Ascending aorta (tissue), 2 donors: ENCODE measurements at regions of chr7 and their contacts with region 1.

Region 1: GRCh38 chr7:55572378-55573233 is at the start of gene VOPP1:
- DNase-seq: peak; percentile 26 to 82
- H3K4me3 ChIP-seq: peak within 1 kb of the TSS; percentile 85 to 97
- H3K27ac ChIP-seq: peak within 1 kb of the TSS; percentile 91 to 93
- H3K4me1 ChIP-seq: peaks cover 11 to 44% of the 10 kb centered on the region in 2 donors
- H3K27me3 ChIP-seq: no peaks in the 10 kb centered on the region
- CTCF ChIP-seq: peak in 1 of 3 experiments; percentile 38
- total RNA-seq, gene VOPP1: 78.8 TPM

Region 2: DNA sequence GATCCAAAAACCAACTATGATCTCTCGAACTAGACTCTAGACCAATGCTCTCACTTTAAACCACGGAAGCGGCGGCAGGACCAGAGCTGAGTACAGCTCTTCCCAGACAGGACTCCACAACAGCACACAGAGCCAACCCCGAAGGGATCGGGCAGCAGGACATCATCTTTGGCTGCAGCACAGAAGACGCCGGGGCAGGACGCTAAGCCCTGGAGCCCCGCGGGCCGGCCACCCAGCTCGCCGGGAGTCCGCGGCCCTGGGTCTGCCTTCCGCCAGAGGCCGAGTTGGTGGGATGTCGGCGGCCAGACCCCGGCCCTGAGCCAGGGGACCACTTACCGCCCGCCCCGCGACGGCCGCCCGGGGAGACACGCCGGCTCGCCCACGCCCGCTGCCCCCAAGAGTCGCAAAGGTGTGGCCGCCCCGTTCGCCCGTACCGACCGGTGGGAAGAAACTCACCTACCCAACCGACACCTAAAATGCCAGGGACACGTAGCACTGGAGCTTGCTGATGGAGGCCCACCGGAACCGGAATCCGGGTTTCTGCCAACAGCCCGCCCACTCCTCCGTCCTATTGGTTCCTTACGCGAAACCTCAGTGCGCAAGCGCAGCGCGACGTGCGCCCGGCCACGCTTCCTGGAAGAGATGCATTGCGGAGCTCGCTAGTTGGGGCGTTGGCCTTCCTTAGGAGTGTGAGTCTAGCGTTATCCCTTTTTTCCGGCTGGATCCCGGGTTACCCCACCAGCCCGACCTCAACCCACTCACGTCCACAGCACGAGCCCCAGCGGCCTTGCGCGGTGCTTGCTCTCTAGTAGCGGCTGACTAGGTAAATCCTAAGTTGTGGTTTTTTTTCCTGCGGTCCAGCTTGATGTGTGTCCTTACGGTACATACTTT is 813.7 kb before region 1 on chr7 and contains the start of gene SEC61G:
- intact Hi-C with region 1: loop called (anchors 10 kb)
- DNase-seq: peak; percentile 89 to 98
- H3K4me3 ChIP-seq: peak within 1 kb of the TSS; percentile 78 to 92
- H3K27ac ChIP-seq: peak within 1 kb of the TSS; percentile 84 to 86
- H3K4me1 ChIP-seq: peaks cover 0 to 19% of the 10 kb centered on the region in 2 donors
- H3K27me3 ChIP-seq: no peaks in the 10 kb centered on the region
- CTCF ChIP-seq: peak in 1 of 3 experiments; percentile 12
- total RNA-seq, gene SEC61G: 166 TPM

Region 3: GRCh38 chr7:55365675-55366460 is 206.7 kb before region 1 on chr7:
- intact Hi-C with region 1: loop called (anchors 5 kb)
- DNase-seq: peak; percentile 70 to 97
- H3K4me3 ChIP-seq: peak overlapping the region; percentile 64 to 100
- H3K27ac ChIP-seq: peak overlapping the region; percentile 98 to 99
- H3K4me1 ChIP-seq: peaks cover 5 to 10% of the 10 kb centered on the region in 2 donors
- H3K27me3 ChIP-seq: no peaks in the 10 kb centered on the region
- CTCF ChIP-seq: peak in 2 of 3 experiments; percentile 21 to 44

Region 4: GRCh38 chr7:55552320-55553023 is 20.1 kb before region 1 on chr7:
- intact Hi-C with region 1: loop called (anchors 1 kb)
- DNase-seq: peak; percentile 51 to 86
- H3K4me3 ChIP-seq: peak overlapping the region; percentile 32 to 41
- H3K27ac ChIP-seq: peak overlapping the region; percentile 74 to 76
- H3K4me1 ChIP-seq: peaks cover 0 to 17% of the 10 kb centered on the region in 2 donors
- H3K27me3 ChIP-seq: no peaks in the 10 kb centered on the region
- CTCF ChIP-seq: no peak

Region 5: GRCh38 chr7:55964261-55965099 is 391.9 kb after region 1 on chr7 and contains the start of gene NIPSNAP2:
- intact Hi-C with region 1: loop called (anchors 5 kb)
- DNase-seq: peak; percentile 15 to 86
- H3K4me3 ChIP-seq: peak within 1 kb of the TSS; percentile 90 to 92
- H3K27ac ChIP-seq: peak within 1 kb of the TSS; percentile 88 to 99
- H3K4me1 ChIP-seq: peaks cover 4 to 13% of the 10 kb centered on the region in 2 donors
- H3K27me3 ChIP-seq: no peaks in the 10 kb centered on the region
- CTCF ChIP-seq: peak in 1 of 3 experiments; percentile 83
- total RNA-seq, gene NIPSNAP2: 33.3 TPM

Region 6: GRCh38 chr7:56092789-56093531 is 520.4 kb after region 1 on chr7 and contains the start of gene PHKG1:
- intact Hi-C with region 1: loop called (anchors 5 kb)
- DNase-seq: peak in 1 of 2 donors; percentile 91
- H3K4me3 ChIP-seq: peak within 1 kb of the TSS; percentile 13 to 37
- H3K27ac ChIP-seq: peak within 1 kb of the TSS; percentile 77 to 86
- H3K4me1 ChIP-seq: peaks cover 3 to 14% of the 10 kb centered on the region in 2 donors
- H3K27me3 ChIP-seq: no peaks in the 10 kb centered on the region
- CTCF ChIP-seq: peak; percentile 6 to 75 (median 67)
- total RNA-seq, gene PHKG1: 1.1 TPM